PC-3 (cell line): ENCODE measurements at regions of chr21 and their contacts with region 1.

Region 1: GRCh38 chr21:31180256-31181081 is 142.2 kb upstream of the KRTAP19-8 start:
- DNase-seq: peak; percentile 71
- ATAC-seq: peak; percentile 77
- H3K4me3 ChIP-seq: no peak overlapping the region
- H3K27ac ChIP-seq: no peak overlapping the region
- H3K4me1 ChIP-seq: no peaks in the 10 kb centered on the region
- H3K27me3 ChIP-seq: no peaks in the 10 kb centered on the region
- CTCF ChIP-seq: peak; percentile 81

Region 2: DNA sequence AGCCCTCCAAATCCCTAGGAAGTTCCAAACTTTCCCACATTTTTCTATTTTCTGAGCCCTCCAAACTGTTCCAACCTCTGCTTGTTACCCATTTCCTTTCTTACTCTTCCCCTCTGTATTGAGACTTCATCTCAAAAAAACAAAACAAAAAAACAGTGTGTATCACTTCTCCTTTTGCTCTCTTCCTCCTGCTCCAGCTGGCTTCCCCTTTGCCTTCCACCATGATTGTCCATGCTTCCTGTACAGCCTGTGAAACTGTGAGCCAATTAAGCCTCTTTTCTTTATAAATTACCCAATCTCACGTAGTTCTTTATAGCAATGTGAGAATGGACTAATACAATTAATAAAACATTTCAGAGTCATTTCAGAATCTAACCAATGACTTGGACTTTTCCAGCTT is 72.6 kb before region 1 on chr21:
- CTCF ChIA-PET with region 1: interaction called, 4 read pairs
- POLR2A ChIA-PET with region 1: no interaction called
- intact Hi-C with region 1: loop called (anchors 1 kb)
- DNase-seq: no peak
- ATAC-seq: no peak
- H3K4me3 ChIP-seq: no peak overlapping the region
- H3K27ac ChIP-seq: no peak overlapping the region
- H3K4me1 ChIP-seq: no peaks in the 10 kb centered on the region
- H3K27me3 ChIP-seq: no peaks in the 10 kb centered on the region
- CTCF ChIP-seq: no peak